Transverse colon (tissue), 4 donors: ENCODE measurements at regions of chr13 and their contacts with region 1.

Region 1: GRCh38 chr13:52758114-52758513 is 18.5 kb upstream of the CNMD start:
- DNase-seq: no peak
- H3K4me3 ChIP-seq: no peak overlapping the region
- H3K27ac ChIP-seq: no peak overlapping the region
- H3K4me1 ChIP-seq: no peaks in the 10 kb centered on the region
- H3K27me3 ChIP-seq: no peaks in the 10 kb centered on the region
- CTCF ChIP-seq: no peak
- EP300 ChIP-seq: no peak
- POLR2A ChIP-seq: no peak

Region 2: DNA sequence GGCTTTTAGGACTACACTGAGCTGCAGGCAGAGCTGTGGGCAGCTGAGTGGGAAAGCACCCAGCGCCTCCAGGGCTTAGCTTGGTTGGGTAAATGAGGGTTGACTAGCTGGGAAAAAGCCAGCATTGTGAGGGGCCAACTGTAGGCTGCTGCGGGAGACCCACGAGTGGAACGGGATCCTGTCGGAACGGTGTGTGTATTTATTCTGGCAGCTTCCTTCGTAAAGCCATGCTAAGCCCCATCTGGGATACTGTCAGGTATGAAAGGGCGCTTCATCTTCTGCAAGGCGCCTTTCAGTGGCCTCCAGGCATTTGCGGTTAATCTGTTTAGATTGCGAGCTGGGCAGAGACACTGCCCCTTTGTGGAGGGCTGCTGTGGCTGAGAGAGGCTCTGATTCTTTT is 21.0 kb after region 1 on chr13:
- in situ Hi-C with region 1: no loop called
- intact Hi-C with region 1: loop called (anchors 2 kb)
- DNase-seq: no peak
- H3K4me3 ChIP-seq: no peak overlapping the region
- H3K27ac ChIP-seq: no peak overlapping the region
- H3K4me1 ChIP-seq: no peaks in the 10 kb centered on the region
- H3K27me3 ChIP-seq: no peaks in the 10 kb centered on the region
- CTCF ChIP-seq: no peak
- EP300 ChIP-seq: no peak
- POLR2A ChIP-seq: no peak

Region 3: GRCh38 chr13:52862358-52863206 is 104.5 kb after region 1 on chr13:
- in situ Hi-C with region 1: no loop called
- intact Hi-C with region 1: no loop called
- DNase-seq: peak; percentile 44
- H3K4me3 ChIP-seq: no peak overlapping the region
- H3K27ac ChIP-seq: no peak overlapping the region
- H3K4me1 ChIP-seq: no peaks in the 10 kb centered on the region
- H3K27me3 ChIP-seq: peaks cover 4% of the 10 kb centered on the region
- CTCF ChIP-seq: peak; percentile 32 to 63 (median 46)
- EP300 ChIP-seq: no peak
- POLR2A ChIP-seq: no peak

Region 4: DNA sequence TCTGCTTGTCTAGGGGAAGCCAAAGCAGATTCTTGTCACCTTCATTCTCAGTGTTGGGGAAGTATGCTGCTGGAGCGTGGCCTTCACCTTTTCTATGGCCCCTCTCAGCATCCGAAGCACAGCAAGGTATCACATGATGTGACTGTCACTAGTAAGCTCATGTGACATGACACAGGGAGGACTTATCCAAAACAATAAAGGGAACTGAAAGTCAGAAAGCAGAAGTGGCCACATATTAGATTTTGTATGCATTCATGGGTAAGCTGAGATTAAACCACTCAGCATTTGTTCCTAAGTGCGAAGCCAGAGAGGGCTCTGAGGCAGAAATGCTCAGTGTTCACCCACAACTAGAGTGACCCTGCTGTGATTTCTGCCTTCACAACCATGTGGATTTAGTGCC is 163.1 kb after region 1 on chr13:
- in situ Hi-C with region 1: no loop called
- intact Hi-C with region 1: no loop called
- DNase-seq: no peak
- H3K4me3 ChIP-seq: no peak overlapping the region
- H3K27ac ChIP-seq: no peak overlapping the region
- H3K4me1 ChIP-seq: no peaks in the 10 kb centered on the region
- H3K27me3 ChIP-seq: no peaks in the 10 kb centered on the region
- CTCF ChIP-seq: no peak
- EP300 ChIP-seq: no peak
- POLR2A ChIP-seq: no peak